ENCODE measurements at regions of chr6 and their contacts with region 1.

Region 1: DNA sequence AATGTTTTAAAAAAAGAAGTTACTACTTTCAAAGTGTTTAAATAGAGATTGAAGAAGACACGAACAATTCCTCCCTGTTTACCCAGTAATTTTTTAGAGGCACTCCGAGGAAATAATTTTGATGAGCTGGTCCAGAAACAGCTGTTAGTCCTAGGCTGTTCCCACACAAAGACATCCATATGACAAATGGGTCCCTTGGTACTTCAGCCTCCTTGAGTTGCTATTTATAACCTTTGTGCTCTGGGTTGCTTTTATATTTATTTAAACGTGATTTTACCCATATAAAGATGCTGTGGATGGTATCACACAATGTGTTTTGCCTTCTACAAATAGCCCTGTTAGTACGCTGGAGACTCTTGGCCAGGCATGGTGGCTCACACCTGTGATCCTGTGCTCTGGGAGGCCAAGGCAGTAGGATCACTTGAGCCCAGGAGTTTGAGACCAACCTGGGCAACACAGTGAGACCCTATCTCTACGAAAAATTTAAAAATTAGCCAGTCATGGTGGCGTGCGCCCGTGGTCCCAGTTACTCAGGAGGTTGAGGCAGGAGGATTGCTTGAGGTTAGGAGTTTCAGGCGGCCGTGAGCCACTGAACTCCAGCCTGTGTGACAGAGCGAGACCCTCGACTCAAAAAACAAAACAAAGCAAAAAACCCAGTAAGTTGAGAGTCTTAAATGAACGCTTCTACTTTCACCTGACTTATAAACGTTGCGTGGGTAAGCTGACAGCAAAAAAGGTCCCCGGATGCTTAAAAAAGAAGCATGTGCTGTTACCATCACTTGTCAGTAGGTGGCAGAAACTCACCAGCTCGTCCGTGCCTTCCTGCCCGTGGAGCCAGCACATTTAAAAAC is 56.9 kb upstream of the ARMH2 start:
- DNase-seq: peak; percentile 73
- H3K4me3 ChIP-seq: no peak overlapping the region; a peak in 1 of 4 replicates
- H3K27ac ChIP-seq: no peak overlapping the region
- H3K4me1 ChIP-seq: no peaks in the 10 kb centered on the region
- H3K27me3 ChIP-seq: no peaks in the 10 kb centered on the region
- CTCF ChIP-seq: peak; percentile 93
- EP300 ChIP-seq: no peak
- RAD21 ChIP-seq: peak; percentile 98

Region 2: DNA sequence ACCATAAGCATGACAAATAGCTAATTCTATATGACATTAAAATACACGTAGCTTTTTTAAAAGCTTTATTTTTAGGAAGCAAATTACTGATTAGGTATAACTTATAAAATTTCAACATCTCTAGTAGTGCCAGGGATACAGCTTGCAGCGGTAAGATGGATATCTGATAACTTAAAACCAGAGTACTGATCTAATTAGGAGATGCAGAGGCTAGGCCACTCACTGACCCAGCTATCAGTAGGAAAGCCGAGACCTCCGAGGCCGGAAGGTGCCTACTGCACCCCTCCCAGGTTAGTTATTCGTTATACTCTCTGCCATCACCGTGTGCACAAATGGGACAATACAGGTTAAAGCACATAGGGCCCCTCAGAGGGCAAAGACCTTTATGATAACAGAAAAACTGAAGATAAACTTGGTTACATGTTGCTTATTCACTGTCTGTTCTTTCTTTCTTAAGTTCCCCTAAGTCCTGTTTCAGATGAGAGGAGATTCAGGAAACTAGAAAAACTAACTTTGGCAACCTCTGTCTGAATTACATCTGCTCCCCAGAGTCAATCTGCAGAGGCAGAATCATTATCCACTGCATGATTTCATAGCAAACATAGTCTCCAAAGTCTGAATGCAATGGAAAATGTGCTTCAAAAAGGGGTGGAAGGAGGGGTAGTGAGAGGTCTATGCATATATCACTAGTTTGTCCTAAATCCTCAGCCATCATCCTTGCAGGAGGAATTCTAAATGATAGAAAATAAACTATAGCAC is 19.3 kb after region 1 on chr6:
- CTCF ChIA-PET with region 1: interaction called, 18 read pairs
- POLR2A ChIA-PET with region 1: no interaction called
- DNase-seq: peak; percentile 42
- H3K4me3 ChIP-seq: no peak overlapping the region
- H3K27ac ChIP-seq: no peak overlapping the region; a peak in 1 of 4 replicates
- H3K4me1 ChIP-seq: peaks cover 0 to 6% of the 10 kb centered on the region in 2 experiments; a peak in 2 of 4 replicates
- H3K27me3 ChIP-seq: no peaks in the 10 kb centered on the region
- CTCF ChIP-seq: no peak
- EP300 ChIP-seq: peak in 1 of 2 experiments; percentile 61; a peak in 1 of 4 replicates
- RAD21 ChIP-seq: no peak

Region 3: GRCh38 chr6:24888715-24889370 is 33.2 kb after region 1 on chr6:
- CTCF ChIA-PET with region 1: interaction called, 10 read pairs
- POLR2A ChIA-PET with region 1: interaction called, 3 read pairs
- DNase-seq: no peak
- H3K4me3 ChIP-seq: no peak overlapping the region
- H3K27ac ChIP-seq: no peak overlapping the region
- H3K4me1 ChIP-seq: no peaks in the 10 kb centered on the region; a peak in 2 of 4 replicates
- H3K27me3 ChIP-seq: no peaks in the 10 kb centered on the region
- CTCF ChIP-seq: no peak
- EP300 ChIP-seq: no peak
- RAD21 ChIP-seq: no peak

Region 4: DNA sequence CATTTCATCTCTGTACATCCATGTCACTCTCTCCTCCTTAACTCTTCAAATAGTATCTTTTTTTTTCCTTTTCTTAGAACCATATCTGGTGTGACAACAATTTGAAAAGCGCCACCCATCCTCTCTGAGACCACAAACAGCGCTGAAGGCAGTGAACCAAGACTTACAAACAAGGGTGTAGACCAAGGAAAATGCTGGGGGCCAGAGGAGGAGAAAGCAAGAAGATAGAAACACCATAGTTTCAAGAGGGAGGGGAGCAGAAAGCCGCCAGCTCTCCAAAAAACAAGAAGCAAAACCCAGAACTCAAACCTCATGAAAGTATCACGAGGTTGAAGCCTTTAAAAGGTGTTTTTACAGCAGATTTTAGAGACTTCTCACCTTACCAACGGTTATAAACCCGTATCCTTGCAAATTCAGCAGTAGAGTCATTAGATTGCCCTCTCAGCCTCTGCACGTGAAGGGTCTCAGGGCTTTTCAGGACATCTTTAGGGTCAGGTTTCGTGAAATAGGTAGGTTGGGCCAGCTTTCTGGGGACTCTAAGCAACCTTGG is 93.5 kb after region 1 on chr6:
- CTCF ChIA-PET with region 1: no interaction called
- POLR2A ChIA-PET with region 1: no interaction called
- DNase-seq: no peak
- H3K4me3 ChIP-seq: no peak overlapping the region
- H3K27ac ChIP-seq: no peak overlapping the region
- H3K4me1 ChIP-seq: no peaks in the 10 kb centered on the region
- H3K27me3 ChIP-seq: no peaks in the 10 kb centered on the region; the same call in 1 of the 2 replicates
- CTCF ChIP-seq: no peak
- EP300 ChIP-seq: no peak
- RAD21 ChIP-seq: no peak

Region 5: DNA sequence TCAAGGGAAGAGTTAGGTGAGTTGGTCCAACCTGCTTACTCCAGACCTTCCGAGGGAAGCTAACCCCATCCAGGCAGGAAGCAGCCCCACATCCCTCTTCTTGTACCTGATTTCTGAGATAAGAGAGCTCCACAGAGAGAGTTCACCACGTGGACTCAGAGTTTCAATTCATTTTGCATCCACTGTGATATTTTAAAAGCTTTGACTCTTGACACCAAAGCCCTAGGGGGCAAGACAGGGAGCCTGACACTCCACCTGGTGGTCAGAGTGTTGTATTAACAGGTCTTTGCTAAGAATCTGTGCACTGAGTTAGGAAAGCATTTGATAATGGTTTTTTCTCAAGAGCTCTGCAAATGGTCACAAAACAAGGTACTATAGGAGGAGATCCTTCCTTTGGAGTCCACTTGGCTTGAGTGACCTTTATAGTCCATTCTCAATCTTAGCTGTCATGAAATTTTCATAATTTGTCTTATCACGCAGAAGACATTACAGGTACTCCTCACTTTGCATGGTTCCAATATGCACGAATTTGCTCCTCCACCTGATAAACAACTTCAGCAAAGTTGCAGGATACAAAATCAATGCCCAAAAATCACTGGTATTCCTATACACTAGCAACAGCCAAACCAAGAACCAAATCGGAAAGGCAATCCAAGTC is 136.3 kb after region 1 on chr6:
- CTCF ChIA-PET with region 1: interaction called, 60 read pairs
- POLR2A ChIA-PET with region 1: no interaction called
- DNase-seq: peak; percentile 51
- H3K4me3 ChIP-seq: no peak overlapping the region; a peak in 1 of 4 replicates
- H3K27ac ChIP-seq: no peak overlapping the region
- H3K4me1 ChIP-seq: peaks cover 0 to 8% of the 10 kb centered on the region in 2 experiments; a peak in 1 of 4 replicates
- H3K27me3 ChIP-seq: no peaks in the 10 kb centered on the region
- CTCF ChIP-seq: peak; percentile 66
- EP300 ChIP-seq: no peak
- RAD21 ChIP-seq: peak; percentile 71

Region 6: GRCh38 chr6:25027221-25027916 is 171.7 kb after region 1 on chr6:
- CTCF ChIA-PET with region 1: interaction called, 10 read pairs
- POLR2A ChIA-PET with region 1: no interaction called
- DNase-seq: no peak
- H3K4me3 ChIP-seq: no peak overlapping the region
- H3K27ac ChIP-seq: no peak overlapping the region
- H3K4me1 ChIP-seq: peaks cover 0 to 14% of the 10 kb centered on the region in 2 experiments; a peak in 1 of 4 replicates
- H3K27me3 ChIP-seq: no peaks in the 10 kb centered on the region
- CTCF ChIP-seq: no peak
- EP300 ChIP-seq: no peak
- RAD21 ChIP-seq: no peak